ENCODE measurements at regions of chr16 and their contacts with region 1.

Region 1: GRCh38 chr16:74623214-74623842 is 16.4 kb upstream of the GLG1 start:
- DNase-seq: peak; percentile 73
- H3K4me3 ChIP-seq: no peak overlapping the region
- H3K27ac ChIP-seq: no peak overlapping the region
- H3K4me1 ChIP-seq: no peaks in the 10 kb centered on the region
- H3K27me3 ChIP-seq: no peaks in the 10 kb centered on the region
- CTCF ChIP-seq: peak; percentile 44 to 45
- POLR2A ChIP-seq: no peak

Region 2: GRCh38 chr16:74199066-74199841 is 424.1 kb before region 1 on chr16:
- CTCF ChIA-PET with region 1: no interaction called
- POLR2A ChIA-PET with region 1: no interaction called
- dilution Hi-C with region 1: no loop called
- intact Hi-C with region 1: no loop called
- DNase-seq: no peak
- H3K4me3 ChIP-seq: no peak overlapping the region
- H3K27ac ChIP-seq: no peak overlapping the region
- H3K4me1 ChIP-seq: no peaks in the 10 kb centered on the region
- H3K27me3 ChIP-seq: no peaks in the 10 kb centered on the region
- CTCF ChIP-seq: no peak
- POLR2A ChIP-seq: no peak

Region 3: GRCh38 chr16:74431516-74431915 is 191.8 kb before region 1 on chr16:
- CTCF ChIA-PET with region 1: no interaction called
- POLR2A ChIA-PET with region 1: no interaction called
- dilution Hi-C with region 1: no loop called
- intact Hi-C with region 1: loop called (anchors 2 kb)
- DNase-seq: no peak
- H3K4me3 ChIP-seq: no peak overlapping the region
- H3K27ac ChIP-seq: no peak overlapping the region
- H3K4me1 ChIP-seq: no peaks in the 10 kb centered on the region
- H3K27me3 ChIP-seq: no peaks in the 10 kb centered on the region
- CTCF ChIP-seq: no peak
- POLR2A ChIP-seq: no peak

Region 4: DNA sequence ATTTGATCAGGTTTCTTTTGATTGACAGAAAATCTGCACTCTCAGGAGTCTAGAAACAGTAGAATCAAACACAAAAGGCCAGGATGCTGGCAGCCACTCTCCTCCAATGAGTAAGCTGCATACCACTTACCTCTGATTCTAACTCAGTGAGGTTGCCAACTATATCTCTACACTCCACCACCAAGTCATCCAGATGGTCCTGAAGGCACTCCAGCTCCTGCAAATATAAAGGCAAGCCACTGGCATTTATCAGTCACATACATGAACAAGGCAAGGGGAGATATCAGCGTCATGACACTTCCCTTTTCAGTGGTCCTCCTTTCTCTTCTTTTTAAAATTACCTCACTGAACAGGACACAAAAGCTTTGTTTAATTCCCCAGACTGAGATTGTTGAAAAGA is 148.9 kb before region 1 on chr16:
- CTCF ChIA-PET with region 1: interaction called, 3 read pairs
- POLR2A ChIA-PET with region 1: no interaction called
- dilution Hi-C with region 1: no loop called
- intact Hi-C with region 1: loop called (anchors 2 kb)
- DNase-seq: no peak
- H3K4me3 ChIP-seq: no peak overlapping the region
- H3K27ac ChIP-seq: no peak overlapping the region
- H3K4me1 ChIP-seq: no peaks in the 10 kb centered on the region
- H3K27me3 ChIP-seq: no peaks in the 10 kb centered on the region
- CTCF ChIP-seq: no peak
- POLR2A ChIP-seq: no peak

Region 5: GRCh38 chr16:74666425-74667254 is 43.3 kb after region 1 on chr16 and contains the start of gene RFWD3:
- CTCF ChIA-PET with region 1: no interaction called
- POLR2A ChIA-PET with region 1: no interaction called
- dilution Hi-C with region 1: no loop called
- intact Hi-C with region 1: no loop called
- DNase-seq: peak; percentile 98
- H3K4me3 ChIP-seq: peak within 1 kb of the TSS; percentile 84 to 95 (median 88)
- H3K27ac ChIP-seq: peak within 1 kb of the TSS; percentile 62
- H3K4me1 ChIP-seq: peaks cover 4% of the 10 kb centered on the region
- H3K27me3 ChIP-seq: no peaks in the 10 kb centered on the region
- CTCF ChIP-seq: peak in 1 of 2 donors; percentile 0
- POLR2A ChIP-seq: peak; percentile 88
- total RNA-seq, gene RFWD3: 47.6 and 51.6 TPM in 2 replicates

Region 6: DNA sequence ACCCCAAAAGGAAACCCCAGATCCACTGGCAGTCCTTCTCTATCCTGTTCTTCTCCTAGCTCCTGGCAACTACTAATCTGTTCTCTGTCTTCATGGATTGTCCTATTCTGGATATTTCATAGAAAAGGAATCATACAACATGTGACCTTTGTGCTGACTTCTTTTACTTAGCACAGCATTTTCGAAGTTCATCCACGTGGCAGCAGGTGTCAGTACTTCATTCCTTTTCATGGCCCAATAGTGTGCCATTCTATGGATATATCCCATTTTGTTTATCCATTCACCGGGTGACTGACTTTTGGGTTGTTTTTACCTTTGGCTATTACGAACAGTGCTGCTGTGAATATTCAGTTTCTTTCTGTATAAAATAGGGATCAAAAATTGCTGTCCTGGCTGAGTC is 161.7 kb after region 1 on chr16:
- CTCF ChIA-PET with region 1: no interaction called
- POLR2A ChIA-PET with region 1: no interaction called
- dilution Hi-C with region 1: no loop called
- intact Hi-C with region 1: no loop called
- DNase-seq: no peak
- H3K4me3 ChIP-seq: no peak overlapping the region
- H3K27ac ChIP-seq: no peak overlapping the region
- H3K4me1 ChIP-seq: no peaks in the 10 kb centered on the region
- H3K27me3 ChIP-seq: no peaks in the 10 kb centered on the region
- CTCF ChIP-seq: no peak
- POLR2A ChIP-seq: no peak